ENCODE measurements at regions of chr6 and their contacts with region 1.

Region 1: DNA sequence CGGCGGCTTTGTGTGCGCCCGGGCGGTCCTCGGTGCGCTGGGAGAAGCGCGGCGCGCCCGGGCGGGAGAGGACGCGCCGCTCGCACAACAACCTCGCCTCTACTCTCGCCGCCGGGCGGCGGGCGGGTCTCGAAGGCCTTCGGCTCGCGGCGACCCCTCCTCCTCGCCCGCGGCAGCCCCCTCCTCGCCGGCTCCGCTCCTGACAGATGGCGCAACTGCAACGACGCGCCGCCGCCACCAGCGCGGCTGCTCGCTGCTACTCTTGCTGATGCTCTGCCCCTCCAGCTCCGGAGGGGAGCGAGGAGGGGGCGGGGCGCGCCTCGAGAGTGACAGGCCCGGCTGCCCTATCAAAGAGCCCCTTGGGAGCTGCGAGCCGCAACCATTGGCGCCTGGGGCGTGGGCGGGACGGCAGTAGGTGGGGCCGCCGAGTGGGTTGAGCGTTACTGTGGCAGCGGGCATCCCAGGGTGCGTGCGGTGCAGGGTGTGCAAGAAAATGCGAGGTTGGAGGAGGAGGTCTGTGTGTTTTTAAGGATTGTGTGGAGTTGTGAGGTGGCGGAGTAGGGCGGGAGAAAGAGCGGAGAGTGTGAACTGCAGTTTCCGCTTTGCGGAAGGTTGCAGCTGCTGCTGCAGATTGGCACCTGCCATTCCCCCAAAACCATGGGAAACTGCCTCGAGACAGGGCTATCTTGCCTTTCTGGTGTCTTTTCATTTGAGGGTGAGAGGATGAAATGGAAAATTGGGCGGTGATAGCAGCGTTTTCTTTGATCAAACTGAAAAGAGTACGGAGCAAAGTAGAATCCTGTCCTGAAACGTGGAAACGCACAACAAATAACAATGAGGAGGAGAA is at the start of gene FYN:
- DNase-seq: peak; percentile 97 to 99 (median 98)
- ATAC-seq: peak; percentile 86
- H3K4me3 ChIP-seq: peak within 1 kb of the TSS; percentile 86
- H3K4me3 Mint-ChIP-seq: peak within 1 kb of the TSS; percentile 97
- H3K27ac ChIP-seq: peak within 1 kb of the TSS; percentile 87 to 94
- H3K27ac Mint-ChIP-seq: peak within 1 kb of the TSS; percentile 93
- H3K4me1 ChIP-seq: peaks cover 22% of the 10 kb centered on the region
- H3K4me1 Mint-ChIP-seq: peaks cover 54% of the 10 kb centered on the region
- H3K27me3 ChIP-seq: no peaks in the 10 kb centered on the region
- H3K27me3 Mint-ChIP-seq: no peaks in the 10 kb centered on the region
- CTCF ChIP-seq: no peak
- total RNA-seq, gene FYN: 419 TPM

Region 2: GRCh38 chr6:111709615-111710398 is 163.6 kb before region 1 on chr6:
- CTCF ChIA-PET with region 1: interaction called, 3 read pairs
- POLR2A ChIA-PET with region 1: interaction called, 14 read pairs
- intact Hi-C with region 1: loop called (anchors 1 to 2 kb)
- DNase-seq: peak; percentile 21 to 85 (median 52)
- ATAC-seq: peak; percentile 80
- H3K4me3 ChIP-seq: no peak overlapping the region
- H3K4me3 Mint-ChIP-seq: peak overlapping the region; percentile 67
- H3K27ac ChIP-seq: no peak overlapping the region
- H3K27ac Mint-ChIP-seq: peak overlapping the region; percentile 93
- H3K4me1 ChIP-seq: peaks cover 41% of the 10 kb centered on the region
- H3K4me1 Mint-ChIP-seq: peaks cover 64% of the 10 kb centered on the region
- H3K27me3 ChIP-seq: no peaks in the 10 kb centered on the region
- H3K27me3 Mint-ChIP-seq: no peaks in the 10 kb centered on the region
- CTCF ChIP-seq: peak; percentile 80

Region 3: DNA sequence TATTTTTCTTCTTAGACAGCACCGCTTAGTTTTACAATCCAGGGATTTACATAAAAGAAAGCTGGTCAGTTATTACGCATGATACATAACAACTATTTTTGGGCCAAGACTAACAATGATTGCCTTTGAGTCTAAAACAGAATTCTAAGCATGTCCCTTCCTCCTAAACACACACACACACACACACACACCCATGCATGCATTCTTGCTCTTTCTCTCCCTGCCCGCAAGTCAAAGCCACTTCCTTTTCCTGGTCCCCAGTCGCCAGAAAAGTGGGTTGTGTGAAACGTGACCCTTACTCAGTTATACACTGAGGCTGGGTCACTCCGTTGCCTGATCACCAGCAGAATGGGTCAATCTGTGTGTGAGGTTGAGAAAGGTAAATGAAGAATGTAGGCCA is 31.6 kb before region 1 on chr6:
- CTCF ChIA-PET with region 1: interaction called, 5 read pairs
- POLR2A ChIA-PET with region 1: interaction called, 11 read pairs
- intact Hi-C with region 1: loop called (anchors 5 kb)
- DNase-seq: peak in 7 of 14 experiments; percentile 35 to 87 (median 63)
- ATAC-seq: peak; percentile 3
- H3K4me3 ChIP-seq: peak overlapping the region; percentile 0
- H3K4me3 Mint-ChIP-seq: no peak overlapping the region
- H3K27ac ChIP-seq: peak overlapping the region; percentile 54 to 67
- H3K27ac Mint-ChIP-seq: no peak overlapping the region
- H3K4me1 ChIP-seq: peaks cover 92% of the 10 kb centered on the region
- H3K4me1 Mint-ChIP-seq: no peaks in the 10 kb centered on the region
- H3K27me3 ChIP-seq: no peaks in the 10 kb centered on the region
- H3K27me3 Mint-ChIP-seq: no peaks in the 10 kb centered on the region
- CTCF ChIP-seq: no peak

Region 4: DNA sequence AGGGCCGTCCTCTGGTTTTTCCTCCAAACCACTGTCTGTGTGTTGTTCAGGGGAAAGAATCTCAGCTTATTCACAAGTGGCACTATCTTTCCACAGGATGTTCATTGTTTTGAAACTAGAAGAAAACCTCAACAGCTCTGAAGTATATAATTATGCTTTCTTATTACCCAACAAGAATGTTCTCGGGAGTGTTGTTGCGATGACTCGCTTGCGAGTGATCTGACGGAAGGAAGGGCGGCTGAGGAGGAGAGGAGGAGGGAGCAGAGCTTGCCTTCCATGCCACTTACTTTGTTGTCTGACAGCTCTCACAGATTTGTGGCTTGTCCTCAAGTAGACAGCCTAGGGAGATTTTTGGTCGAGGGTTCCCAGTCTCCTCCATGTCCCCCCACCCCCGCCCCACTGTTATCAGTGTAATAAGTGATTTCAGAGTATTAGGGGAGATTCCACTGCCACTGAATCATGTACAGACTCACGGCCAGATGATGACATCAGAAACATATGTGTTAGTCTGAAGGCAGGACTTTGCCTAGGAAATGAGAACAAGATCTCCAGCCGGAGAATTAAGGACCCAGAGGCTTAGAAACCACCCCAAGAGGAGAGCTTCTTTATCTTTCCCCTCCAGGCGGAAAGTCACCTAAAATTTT is 99.8 kb after region 1 on chr6:
- CTCF ChIA-PET with region 1: interaction called, 3 read pairs
- POLR2A ChIA-PET with region 1: interaction called, 21 read pairs
- intact Hi-C with region 1: loop called in 1 of 2 experiments (anchors 1 kb)
- DNase-seq: peak; percentile 48 to 92 (median 68)
- ATAC-seq: peak; percentile 90
- H3K4me3 ChIP-seq: peak overlapping the region; percentile 8
- H3K4me3 Mint-ChIP-seq: peak overlapping the region; percentile 68
- H3K27ac ChIP-seq: peak overlapping the region; percentile 82 to 93
- H3K27ac Mint-ChIP-seq: peak overlapping the region; percentile 93
- H3K4me1 ChIP-seq: peaks cover 42% of the 10 kb centered on the region
- H3K4me1 Mint-ChIP-seq: peaks cover 82% of the 10 kb centered on the region
- H3K27me3 ChIP-seq: no peaks in the 10 kb centered on the region
- H3K27me3 Mint-ChIP-seq: no peaks in the 10 kb centered on the region
- CTCF ChIP-seq: no peak

Region 5: GRCh38 chr6:111997078-111997852 is 123.9 kb after region 1 on chr6:
- CTCF ChIA-PET with region 1: interaction called, 9 read pairs
- POLR2A ChIA-PET with region 1: interaction called, 27 read pairs
- intact Hi-C with region 1: loop called (anchors 2 kb)
- DNase-seq: peak; percentile 61 to 92 (median 76)
- ATAC-seq: peak; percentile 70
- H3K4me3 ChIP-seq: peak overlapping the region; percentile 8
- H3K4me3 Mint-ChIP-seq: peak overlapping the region; percentile 75
- H3K27ac ChIP-seq: no peak overlapping the region
- H3K27ac Mint-ChIP-seq: peak overlapping the region; percentile 82
- H3K4me1 ChIP-seq: peaks cover 40% of the 10 kb centered on the region
- H3K4me1 Mint-ChIP-seq: peaks cover 55% of the 10 kb centered on the region
- H3K27me3 ChIP-seq: no peaks in the 10 kb centered on the region
- H3K27me3 Mint-ChIP-seq: no peaks in the 10 kb centered on the region
- CTCF ChIP-seq: peak; percentile 93

Measured in CD4-positive, alpha-beta T cell (primary cell).